Activated T-helper 1 cell treated with anti-CD3 and anti-CD28 coated beads, Interleukin-12 subunit alpha, Interleukin-12 subunit beta, Interleukin-2, Interleukin-4 antibody, amounts not matched to agents 30 ng/mL and 10 ng/mL and 1 ng/mL, durations not matched to agents 14 hours and 24 hours and 36 hours (primary cell): ENCODE measurements at regions of chr3 and their contacts with region 1.

Region 1: DNA sequence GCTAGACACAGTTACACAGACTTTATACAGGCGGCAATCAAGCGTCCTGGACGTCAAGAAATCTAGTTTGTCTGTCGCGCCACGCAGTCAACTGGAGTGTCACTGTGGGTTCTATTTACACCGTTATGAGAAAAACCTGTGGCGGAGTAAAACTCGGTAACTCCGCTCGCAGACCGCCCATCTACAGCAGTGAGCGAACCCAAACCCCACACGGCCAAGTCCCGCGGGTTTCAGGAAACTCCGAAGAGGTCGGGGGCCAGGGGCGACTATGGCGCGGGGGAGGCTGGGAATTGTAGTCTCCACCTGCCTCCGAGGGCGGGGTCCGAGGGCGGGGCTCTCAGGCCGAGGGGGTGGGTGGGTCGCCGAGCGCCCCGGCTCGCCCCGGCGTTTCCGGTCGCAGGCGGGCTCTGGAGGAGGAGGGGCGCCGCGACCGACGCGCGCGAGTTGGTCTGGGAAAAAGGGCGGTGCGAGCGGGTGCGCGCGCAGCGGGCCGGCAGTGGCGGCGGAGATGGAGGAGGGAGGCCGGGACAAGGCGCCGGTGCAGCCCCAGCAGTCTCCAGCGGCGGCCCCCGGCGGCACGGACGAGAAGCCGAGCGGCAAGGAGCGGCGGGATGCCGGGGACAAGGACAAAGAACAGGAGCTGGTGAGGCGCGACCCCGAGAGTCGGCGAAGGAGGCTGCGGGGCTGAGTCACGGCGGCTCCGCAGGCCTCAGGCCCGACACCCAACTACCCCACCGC is at the start of gene PSMD2:
- DNase-seq: peak; percentile 95
- H3K4me3 Mint-ChIP-seq: peak within 1 kb of the TSS; percentile 92
- H3K27ac Mint-ChIP-seq: peak within 1 kb of the TSS; percentile 85
- H3K4me1 Mint-ChIP-seq: peaks cover 23% of the 10 kb centered on the region
- H3K27me3 Mint-ChIP-seq: peaks cover 4% of the 10 kb centered on the region
- total RNA-seq, gene PSMD2: 251 and 255 TPM in 2 replicates

Region 2: DNA sequence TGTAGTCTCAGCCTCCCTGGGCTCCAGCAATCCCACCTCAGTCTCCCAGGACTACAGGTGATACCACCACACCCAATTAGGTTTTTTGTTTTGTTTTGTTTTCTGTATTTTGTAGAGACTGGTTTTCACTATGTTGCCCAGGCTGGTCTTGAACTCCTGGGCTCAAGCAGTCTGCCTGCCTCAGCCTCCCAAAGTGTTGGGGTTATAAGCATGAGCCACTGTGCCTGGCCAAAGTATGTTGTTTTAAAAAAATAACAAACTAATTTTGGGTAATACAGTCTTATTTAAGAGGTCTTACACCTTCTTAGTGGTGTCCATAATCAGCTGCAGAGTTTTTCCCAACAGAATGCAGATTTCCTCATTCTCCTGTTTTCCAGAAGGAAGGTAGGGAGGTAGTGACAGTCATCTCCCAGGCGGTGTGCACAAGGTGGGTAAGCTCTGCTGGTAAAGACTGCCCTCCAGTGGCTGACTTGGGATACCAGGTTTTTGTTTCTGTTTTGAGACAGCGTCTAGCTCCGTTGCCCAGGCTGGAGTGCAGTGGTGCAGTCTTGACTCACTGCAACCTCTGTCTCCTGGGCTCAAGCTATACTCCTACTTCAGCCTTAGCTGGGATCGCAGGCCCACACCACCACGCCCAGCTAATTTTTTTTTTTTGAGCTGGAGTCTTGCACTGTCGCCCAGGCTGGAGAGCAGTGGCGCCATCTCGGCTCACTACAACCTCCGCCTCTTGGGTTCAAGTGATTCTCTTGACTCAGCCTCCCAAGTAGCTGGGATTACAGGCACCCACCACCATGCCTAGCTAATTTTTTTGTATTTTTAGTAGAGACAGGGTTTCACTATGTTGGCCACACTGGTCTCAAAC is 532.0 kb before region 1 on chr3:
- intact Hi-C with region 1: no loop called
- DNase-seq: peak; percentile 63
- H3K4me3 Mint-ChIP-seq: no peak overlapping the region
- H3K27ac Mint-ChIP-seq: no peak overlapping the region
- H3K4me1 Mint-ChIP-seq: peaks cover 7% of the 10 kb centered on the region
- H3K27me3 Mint-ChIP-seq: no peaks in the 10 kb centered on the region

Region 3: DNA sequence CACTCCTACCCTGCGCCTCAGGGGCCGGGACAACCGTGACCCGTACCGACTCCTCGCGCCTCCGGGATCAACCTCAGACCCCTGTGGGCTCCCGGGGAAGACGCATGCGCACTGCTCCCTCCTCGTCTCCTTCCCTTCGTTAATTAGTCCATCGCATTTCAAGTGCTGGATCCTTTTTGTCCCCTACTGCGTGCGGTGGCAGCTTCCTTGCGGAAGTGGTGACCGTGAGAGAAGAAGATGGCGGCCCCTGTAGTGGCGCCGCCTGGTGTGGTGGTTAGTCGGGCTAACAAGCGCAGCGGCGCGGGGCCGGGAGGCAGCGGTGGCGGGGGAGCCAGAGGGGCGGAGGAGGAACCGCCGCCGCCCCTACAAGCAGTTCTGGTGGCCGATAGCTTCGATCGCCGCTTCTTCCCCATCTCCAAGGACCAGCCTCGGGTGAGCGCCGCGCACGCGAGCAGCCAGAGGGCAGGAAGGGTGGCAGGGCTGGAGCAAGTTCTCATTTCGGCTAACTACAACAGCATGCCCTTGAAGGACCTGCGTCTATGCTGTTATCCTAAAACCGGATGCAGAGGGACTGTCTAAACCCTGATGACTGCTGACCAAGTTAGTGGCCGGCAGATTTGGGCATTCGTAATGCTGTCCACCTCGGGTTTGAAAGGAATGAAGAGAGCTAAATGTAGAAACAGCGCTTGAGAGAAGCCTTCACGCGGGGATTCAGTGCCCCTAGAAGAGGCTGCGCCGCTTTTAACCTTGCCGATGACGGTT is 163.6 kb before region 1 on chr3 and contains the start of gene EIF2B5:
- intact Hi-C with region 1: loop called (anchors 1 kb)
- DNase-seq: peak; percentile 83
- H3K4me3 Mint-ChIP-seq: peak within 1 kb of the TSS; percentile 92
- H3K27ac Mint-ChIP-seq: peak within 1 kb of the TSS; percentile 85
- H3K4me1 Mint-ChIP-seq: peaks cover 31% of the 10 kb centered on the region
- H3K27me3 Mint-ChIP-seq: no peaks in the 10 kb centered on the region
- total RNA-seq, gene EIF2B5: 75.6 and 75.9 TPM in 2 replicates

Region 4: DNA sequence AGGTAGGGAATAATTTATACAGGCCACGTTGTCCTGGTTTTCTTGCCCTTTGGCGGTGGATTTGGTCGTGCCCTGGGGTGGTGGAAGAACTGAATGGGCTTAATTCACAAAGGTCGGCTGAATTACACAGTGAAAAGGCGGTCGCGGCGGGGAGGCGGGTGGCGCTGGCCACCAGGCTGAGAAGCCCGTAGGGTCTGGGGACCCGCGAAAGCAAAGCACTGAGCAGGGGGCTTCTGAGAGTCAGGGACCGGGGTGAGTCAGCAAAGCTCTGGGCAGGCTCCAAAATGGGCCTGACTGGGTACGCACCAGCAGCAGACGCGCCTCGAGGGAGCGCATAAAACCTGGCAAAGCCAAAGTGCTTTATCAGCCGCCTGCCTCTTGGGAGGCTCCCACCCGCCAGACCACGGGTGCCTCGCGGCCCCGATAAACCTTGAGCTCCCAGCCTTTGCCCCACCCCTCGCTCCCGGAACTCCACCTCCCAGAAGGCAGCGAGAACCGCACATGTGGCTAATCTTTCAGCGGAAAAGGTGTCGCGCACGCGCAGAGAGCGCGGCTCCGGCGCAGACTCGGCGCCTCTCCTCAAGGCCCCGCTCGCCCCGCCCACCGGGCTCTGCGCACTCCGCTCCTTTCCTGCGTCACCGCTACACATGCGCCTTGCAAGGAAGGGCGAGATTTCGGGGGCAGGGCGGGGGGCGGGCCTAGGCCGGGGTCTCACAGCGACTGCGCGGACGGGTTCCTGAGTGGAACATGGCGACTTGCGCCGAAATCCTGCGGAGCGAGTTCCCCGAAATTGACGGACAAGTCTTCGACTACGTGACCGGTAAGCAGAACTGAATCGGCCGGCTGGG is 113.2 kb before region 1 on chr3 and contains the start of gene ABCF3:
- intact Hi-C with region 1: loop called (anchors 1 kb)
- DNase-seq: peak; percentile 99
- H3K4me3 Mint-ChIP-seq: peak within 1 kb of the TSS; percentile 98
- H3K27ac Mint-ChIP-seq: peak within 1 kb of the TSS; percentile 89
- H3K4me1 Mint-ChIP-seq: peaks cover 25% of the 10 kb centered on the region
- H3K27me3 Mint-ChIP-seq: no peaks in the 10 kb centered on the region
- total RNA-seq, gene ABCF3: 75.2 and 76.4 TPM in 2 replicates

Region 5: GRCh38 chr3:184275961-184276910 is 22.7 kb before region 1 on chr3 and contains the start of gene ECE2:
- intact Hi-C with region 1: no loop called
- DNase-seq: no peak
- H3K4me3 Mint-ChIP-seq: no peak within 1 kb of the TSS
- H3K27ac Mint-ChIP-seq: no peak within 1 kb of the TSS
- H3K4me1 Mint-ChIP-seq: no peaks in the 10 kb centered on the region
- H3K27me3 Mint-ChIP-seq: peaks cover 42% of the 10 kb centered on the region
- total RNA-seq, gene ECE2: not detected in 2 replicates

Region 6: GRCh38 chr3:184314363-184314699 is 15.4 kb after region 1 on chr3 and contains the start of gene EIF4G1:
- intact Hi-C with region 1: loop called (anchors 1 kb)
- DNase-seq: peak; percentile 92
- H3K4me3 Mint-ChIP-seq: peak within 1 kb of the TSS; percentile 88
- H3K27ac Mint-ChIP-seq: peak within 1 kb of the TSS; percentile 93
- H3K4me1 Mint-ChIP-seq: peaks cover 29% of the 10 kb centered on the region
- H3K27me3 Mint-ChIP-seq: no peaks in the 10 kb centered on the region
- total RNA-seq, gene EIF4G1: 657 and 706 TPM in 2 replicates